PC-3 (cell line): ENCODE measurements at regions of chr5 and their contacts with region 1.

Region 1: DNA sequence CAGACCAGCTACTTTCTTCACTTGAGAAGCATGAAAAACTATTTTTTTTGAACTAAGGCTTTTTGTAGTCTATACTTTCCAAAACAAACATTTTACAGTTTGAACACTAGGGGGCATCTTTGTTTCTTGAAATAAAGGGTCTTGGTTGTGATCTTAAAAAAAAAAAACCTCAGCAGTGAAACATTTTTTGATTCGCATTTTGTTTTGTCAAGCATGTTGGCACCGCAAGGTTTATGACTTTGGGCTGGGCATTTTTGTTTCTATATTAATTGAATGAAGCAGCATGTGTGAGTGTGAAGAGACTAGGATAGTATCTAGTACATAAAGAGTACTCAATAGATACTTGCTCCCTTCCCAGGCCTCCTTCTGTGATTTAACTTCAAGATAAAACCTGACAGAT is 31.6 kb upstream of the ACOT12 start:
- DNase-seq: peak; percentile 52
- ATAC-seq: peak; percentile 7; the same call in 1 of the 2 replicates
- H3K4me3 ChIP-seq: no peak overlapping the region
- H3K27ac ChIP-seq: no peak overlapping the region
- H3K4me1 ChIP-seq: peaks cover 73% of the 10 kb centered on the region
- H3K27me3 ChIP-seq: no peaks in the 10 kb centered on the region
- CTCF ChIP-seq: peak; percentile 68

Region 2: DNA sequence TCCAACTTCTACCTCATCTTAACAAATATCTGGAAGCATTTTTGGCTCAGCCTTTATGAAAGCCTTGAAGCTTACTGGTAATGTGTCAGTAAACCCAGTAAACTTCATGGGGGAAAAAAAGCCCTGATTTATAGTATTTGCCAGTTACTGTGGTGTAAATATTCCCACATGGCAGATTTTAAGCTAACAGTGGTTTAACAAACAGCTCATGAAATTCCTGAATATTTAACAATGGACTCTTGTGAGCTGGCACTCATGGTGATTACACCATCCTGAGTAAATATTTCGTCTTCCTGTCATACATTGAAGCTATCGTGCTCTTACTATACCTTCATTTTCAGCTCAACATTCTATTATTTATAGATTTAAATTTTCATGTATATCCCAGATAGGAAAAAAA is 25.4 kb after region 1 on chr5:
- CTCF ChIA-PET with region 1: no interaction called
- POLR2A ChIA-PET with region 1: interaction called, 6 read pairs
- intact Hi-C with region 1: loop called (anchors 2 kb)
- DNase-seq: peak; percentile 86
- ATAC-seq: peak; percentile 87
- H3K4me3 ChIP-seq: no peak overlapping the region
- H3K27ac ChIP-seq: peak overlapping the region; percentile 90
- H3K4me1 ChIP-seq: peaks cover 22% of the 10 kb centered on the region
- H3K27me3 ChIP-seq: no peaks in the 10 kb centered on the region
- CTCF ChIP-seq: no peak

Region 3: GRCh38 chr5:81486711-81487110 is 61.1 kb after region 1 on chr5:
- CTCF ChIA-PET with region 1: no interaction called
- POLR2A ChIA-PET with region 1: no interaction called
- intact Hi-C with region 1: no loop called
- DNase-seq: no peak
- ATAC-seq: no peak
- H3K4me3 ChIP-seq: no peak overlapping the region
- H3K27ac ChIP-seq: no peak overlapping the region
- H3K4me1 ChIP-seq: no peaks in the 10 kb centered on the region
- H3K27me3 ChIP-seq: no peaks in the 10 kb centered on the region
- CTCF ChIP-seq: no peak

Region 4: DNA sequence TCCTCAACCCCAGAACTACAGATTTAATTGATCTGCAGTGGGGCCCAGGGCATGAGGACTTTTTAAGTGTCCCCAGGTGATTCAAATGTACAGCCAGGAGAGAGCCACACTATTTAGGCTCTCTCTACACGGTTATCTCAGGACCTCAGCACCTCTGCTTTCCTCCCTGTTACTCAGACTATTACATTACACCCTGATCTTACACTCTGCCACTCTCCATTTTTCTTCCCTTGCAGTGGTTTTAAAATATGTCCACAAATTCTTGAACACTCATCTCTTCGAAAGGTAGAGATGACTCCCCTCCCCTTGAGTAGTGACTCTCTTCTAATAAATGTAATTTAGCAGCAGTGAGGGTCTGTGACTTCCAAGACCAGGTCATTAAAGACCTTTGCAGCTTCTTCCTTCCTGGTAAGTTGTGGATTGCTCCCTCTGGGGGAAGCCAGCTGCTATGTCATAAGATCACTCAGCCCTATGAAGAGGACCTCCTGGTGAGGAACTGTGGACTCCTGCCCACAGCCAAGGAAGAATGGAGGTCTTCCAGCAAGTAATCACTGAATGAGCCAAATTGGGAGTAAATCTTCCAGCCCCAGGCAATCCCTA is 412.8 kb after region 1 on chr5:
- CTCF ChIA-PET with region 1: no interaction called
- POLR2A ChIA-PET with region 1: no interaction called
- intact Hi-C with region 1: loop called (anchors 5 kb)
- DNase-seq: peak; percentile 49
- ATAC-seq: peak; percentile 82
- H3K4me3 ChIP-seq: no peak overlapping the region
- H3K27ac ChIP-seq: no peak overlapping the region
- H3K4me1 ChIP-seq: peaks cover 11% of the 10 kb centered on the region
- H3K27me3 ChIP-seq: no peaks in the 10 kb centered on the region
- CTCF ChIP-seq: peak; percentile 68

Region 5: DNA sequence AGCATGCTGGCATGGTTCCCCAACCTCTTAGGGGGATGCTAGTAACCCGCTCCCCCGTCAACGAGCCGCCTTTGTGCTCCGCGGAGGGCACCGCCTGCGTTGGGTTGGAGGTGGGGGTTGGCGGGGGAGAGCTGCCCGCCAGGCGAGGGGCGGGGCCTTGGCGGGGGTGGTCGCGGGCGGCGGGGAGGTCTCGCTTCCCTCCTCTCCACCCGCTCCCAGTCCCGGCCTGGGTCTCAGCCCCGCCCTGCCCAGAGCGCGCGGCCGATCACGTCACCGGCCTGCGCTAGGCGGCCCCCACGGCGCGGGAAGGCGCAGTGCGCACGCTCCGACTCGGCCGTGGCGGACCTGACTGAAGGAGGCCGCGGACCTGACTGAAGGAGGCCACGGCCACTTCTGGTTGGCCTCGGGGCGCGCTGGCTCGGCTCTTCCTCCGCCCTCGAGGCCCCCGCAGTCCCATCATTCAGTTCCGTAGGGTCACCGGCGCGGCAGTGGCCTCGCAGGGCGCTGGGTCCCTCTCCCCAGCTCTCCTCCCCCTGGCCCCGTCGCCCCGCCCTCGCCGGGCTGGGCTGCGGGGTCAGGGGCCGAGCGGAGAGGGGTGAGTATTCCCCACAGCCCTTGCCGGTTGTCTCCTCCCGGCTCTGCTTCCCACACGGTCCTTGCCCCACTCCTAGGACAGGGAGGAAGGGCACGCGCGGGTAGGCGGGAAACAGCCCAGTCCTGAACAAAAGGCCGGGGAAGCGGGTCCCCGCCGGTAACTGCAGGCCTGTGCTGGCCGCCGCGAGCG is 546.3 kb after region 1 on chr5 and contains the start of gene ATG10:
- CTCF ChIA-PET with region 1: no interaction called
- POLR2A ChIA-PET with region 1: no interaction called
- intact Hi-C with region 1: loop called (anchors 10 kb)
- DNase-seq: peak; percentile 88
- ATAC-seq: peak; percentile 96
- H3K4me3 ChIP-seq: peak within 1 kb of the TSS; percentile 78
- H3K27ac ChIP-seq: peak within 1 kb of the TSS; percentile 89
- H3K4me1 ChIP-seq: peaks cover 12% of the 10 kb centered on the region; the same call in 1 of the 2 replicates
- H3K27me3 ChIP-seq: no peaks in the 10 kb centered on the region
- CTCF ChIP-seq: no peak
- total RNA-seq, gene ATG10: 11.7 and 11.8 TPM in 2 replicates

Region 6: DNA sequence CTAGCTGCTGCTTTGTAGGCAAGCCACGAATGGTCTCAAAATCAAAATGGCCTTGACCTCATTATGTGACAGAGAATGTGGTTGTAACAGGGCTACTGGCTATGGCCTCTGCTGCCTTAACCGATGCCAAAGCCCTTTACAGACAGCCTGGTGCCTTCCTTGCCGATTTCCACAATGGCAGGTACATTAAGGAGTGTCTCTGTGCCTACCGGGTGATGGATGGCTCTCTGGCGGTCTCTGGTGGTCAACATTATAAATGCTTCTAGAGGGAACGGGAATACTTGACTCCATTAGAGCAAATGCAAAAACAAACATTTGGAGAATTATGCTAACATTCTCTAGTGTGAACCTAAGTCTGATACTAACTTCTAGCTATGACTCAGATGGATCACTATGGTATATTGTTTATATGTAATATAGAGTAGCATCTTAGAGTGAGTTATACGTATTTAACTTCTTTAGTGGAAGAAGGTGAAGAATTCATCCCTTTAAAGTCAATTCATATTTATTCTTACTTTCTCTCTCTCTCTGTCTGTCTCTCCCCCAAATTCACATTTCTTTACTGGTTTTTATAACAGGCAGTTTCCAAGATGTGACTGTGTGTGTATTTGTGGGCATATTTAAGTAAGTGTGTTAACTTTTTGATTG is 800.1 kb after region 1 on chr5:
- CTCF ChIA-PET with region 1: no interaction called
- POLR2A ChIA-PET with region 1: no interaction called
- intact Hi-C with region 1: loop called (anchors 5 kb)
- DNase-seq: peak; percentile 80
- ATAC-seq: peak; percentile 93
- H3K4me3 ChIP-seq: no peak overlapping the region
- H3K27ac ChIP-seq: no peak overlapping the region
- H3K4me1 ChIP-seq: no peaks in the 10 kb centered on the region
- H3K27me3 ChIP-seq: no peaks in the 10 kb centered on the region
- CTCF ChIP-seq: peak; percentile 88